Heart left ventricle (tissue), 16 donors: ENCODE measurements at regions of chr1 and their contacts with region 1.

Region 1: DNA sequence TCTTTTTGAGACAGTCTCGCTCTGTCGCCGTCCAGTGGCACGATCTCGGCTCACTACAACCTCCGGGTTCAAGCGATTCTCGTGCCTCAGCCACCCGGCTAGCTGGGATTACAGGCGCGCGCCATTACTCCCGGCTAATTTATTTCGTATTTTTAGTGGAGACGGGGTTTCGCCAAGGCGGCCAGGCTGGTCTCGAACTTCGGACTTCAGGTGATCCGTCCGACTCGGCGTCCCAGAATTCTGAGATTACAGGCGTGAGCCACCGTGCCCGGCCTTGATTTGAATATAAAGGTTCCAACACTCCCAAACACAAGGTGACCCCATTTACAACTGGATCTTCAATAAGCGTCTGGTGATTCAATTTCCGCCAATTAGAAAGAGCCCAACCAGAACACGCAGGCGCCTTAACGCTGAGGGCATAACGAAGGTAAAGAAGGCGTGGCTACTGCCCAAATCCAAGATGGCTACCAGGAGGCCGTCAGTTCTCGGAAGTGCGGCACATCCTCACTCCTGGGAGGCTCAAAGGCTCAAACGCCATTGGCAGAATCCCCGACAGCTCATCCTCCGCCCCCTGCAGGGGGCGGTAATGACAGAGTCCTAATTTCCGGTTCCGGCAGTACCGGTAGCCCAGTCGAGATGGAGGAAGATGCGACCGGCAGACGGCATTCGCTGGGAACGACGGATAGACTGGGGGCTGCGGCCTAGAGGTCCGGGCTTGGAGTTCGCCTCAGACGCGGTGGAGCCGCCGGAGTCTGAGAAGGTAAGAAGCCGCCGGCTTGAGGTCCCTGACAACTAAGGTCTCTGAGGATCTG is at the start of gene SLC25A44:
- DNase-seq: peak; percentile 96 to 97 (median 97)
- ATAC-seq: peak; percentile 99 to 100 (median 100)
- H3K4me3 ChIP-seq: peak within 1 kb of the TSS; percentile 59 to 99 (median 82)
- H3K27ac ChIP-seq: peak within 1 kb of the TSS in 11 of 12 donors; percentile 74 to 92 (median 88)
- H3K4me1 ChIP-seq: peaks cover 0 to 51% (median 27%) of the 10 kb centered on the region in 12 donors
- H3K27me3 ChIP-seq: no peaks in the 10 kb centered on the region
- CTCF ChIP-seq: peak; percentile 35 to 82 (median 66)
- POLR2A ChIP-seq: peak in 1 of 2 donors; percentile 71
- total RNA-seq, gene SLC25A44: 16.4 to 27.4 (median 20.5) TPM

Region 2: GRCh38 chr1:156135821-156136477 is 57.7 kb before region 1 on chr1:
- intact Hi-C with region 1: no loop called
- DNase-seq: no peak
- ATAC-seq: no peak
- H3K4me3 ChIP-seq: no peak overlapping the region
- H3K27ac ChIP-seq: no peak overlapping the region
- H3K4me1 ChIP-seq: peaks cover 0 to 20% (median 3%) of the 10 kb centered on the region in 12 donors
- H3K27me3 ChIP-seq: no peaks in the 10 kb centered on the region
- CTCF ChIP-seq: no peak
- POLR2A ChIP-seq: no peak

Region 3: DNA sequence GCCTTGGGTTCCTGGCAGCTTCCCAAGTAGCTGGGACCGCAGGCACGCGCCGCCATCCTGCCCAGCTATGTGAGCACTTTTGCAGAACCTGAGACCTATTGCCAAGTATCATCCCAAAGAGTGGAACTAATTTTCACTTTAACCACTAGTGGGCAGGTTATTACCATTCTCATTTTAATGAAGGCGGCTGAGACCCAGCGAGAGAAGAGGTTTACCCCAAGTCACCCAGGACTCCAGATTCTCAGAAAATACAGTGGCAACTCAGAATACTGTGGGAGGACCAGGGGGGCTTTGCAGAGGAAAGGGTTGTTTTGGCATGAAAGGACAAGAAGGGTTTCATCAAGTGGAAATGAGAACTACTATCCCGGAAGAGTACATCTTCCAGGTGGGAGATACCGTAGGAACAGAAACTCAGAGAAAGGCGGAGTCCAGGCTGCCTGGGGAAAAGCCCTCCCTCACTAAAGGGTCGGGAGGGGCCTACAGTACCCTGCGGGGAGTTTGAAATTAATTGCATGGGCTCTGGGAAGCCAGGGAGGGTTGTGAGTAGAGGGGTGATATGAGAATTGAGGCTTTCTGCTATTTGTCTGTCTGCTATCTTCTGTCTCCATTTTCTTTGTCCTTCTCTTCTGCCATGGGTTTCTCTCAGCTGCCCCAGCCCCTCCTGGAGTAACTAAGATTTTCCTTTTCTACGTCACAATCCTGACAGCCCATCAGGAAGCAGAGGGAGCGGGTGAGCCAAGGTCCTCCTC is 47.5 kb before region 1 on chr1:
- intact Hi-C with region 1: loop called in 1 of 10 experiments (anchors 5 kb)
- DNase-seq: peak; percentile 77 to 88 (median 82)
- ATAC-seq: peak; percentile 45 to 68 (median 54)
- H3K4me3 ChIP-seq: peak overlapping the region in 3 of 12 donors; percentile 5 to 23 (median 11)
- H3K27ac ChIP-seq: peak overlapping the region in 1 of 12 donors; percentile 18
- H3K4me1 ChIP-seq: peaks cover 5 to 52% (median 17%) of the 10 kb centered on the region in 12 donors
- H3K27me3 ChIP-seq: peaks cover 0 to 19% (median 2%) of the 10 kb centered on the region in 9 donors
- CTCF ChIP-seq: peak; percentile 54 to 77 (median 67)
- POLR2A ChIP-seq: no peak

Region 4: DNA sequence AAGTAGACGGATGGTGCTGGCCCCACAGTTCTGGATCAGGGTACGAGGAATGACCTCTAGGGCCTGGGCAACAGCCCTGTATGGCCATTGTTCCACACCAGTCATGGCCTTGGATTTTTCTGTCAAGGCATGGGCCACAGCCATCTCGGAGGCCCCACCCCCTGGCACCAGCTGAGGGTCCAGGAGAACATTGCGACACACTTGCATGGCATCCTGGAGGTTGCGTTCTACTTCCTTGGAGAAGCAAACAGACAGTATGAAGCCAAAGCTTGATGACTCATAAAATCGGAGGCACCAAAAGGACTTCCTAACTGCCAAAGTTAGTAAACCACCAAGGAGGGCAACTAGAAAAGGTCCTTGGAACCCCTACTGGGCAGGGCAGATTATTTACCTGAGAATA is 117.3 kb after region 1 on chr1:
- intact Hi-C with region 1: no loop called
- DNase-seq: no peak
- ATAC-seq: no peak
- H3K4me3 ChIP-seq: no peak overlapping the region
- H3K27ac ChIP-seq: no peak overlapping the region
- H3K4me1 ChIP-seq: no peaks in the 10 kb centered on the region
- H3K27me3 ChIP-seq: no peaks in the 10 kb centered on the region
- CTCF ChIP-seq: no peak
- POLR2A ChIP-seq: no peak